ENCODE measurements at regions of chr7 and their contacts with region 1.

Region 1: GRCh38 chr7:111098011-111098925 is 7.3 kb downstream of the LRRN3 start:
- DNase-seq: no peak
- ATAC-seq: peak; percentile 68
- H3K4me3 ChIP-seq: no peak overlapping the region
- H3K27ac ChIP-seq: no peak overlapping the region
- H3K4me1 ChIP-seq: no peaks in the 10 kb centered on the region
- H3K27me3 ChIP-seq: no peaks in the 10 kb centered on the region
- CTCF ChIP-seq: peak; percentile 58 to 71 (median 60)
- EP300 ChIP-seq: no peak
- POLR2A ChIP-seq: no peak
- RAD21 ChIP-seq: peak; percentile 66

Region 2: GRCh38 chr7:109844362-109844761 is 1253.9 kb before region 1 on chr7:
- CTCF ChIA-PET with region 1: no interaction called
- POLR2A ChIA-PET with region 1: no interaction called
- RAD21 ChIA-PET with region 1: no interaction called
- SMC1A ChIA-PET with region 1: interaction called, 4 read pairs
- in situ Hi-C with region 1: no loop called
- intact Hi-C with region 1: loop called (anchors 10 kb)
- DNase-seq: no peak
- ATAC-seq: no peak
- H3K4me3 ChIP-seq: no peak overlapping the region
- H3K27ac ChIP-seq: no peak overlapping the region
- H3K4me1 ChIP-seq: no peaks in the 10 kb centered on the region
- H3K27me3 ChIP-seq: no peaks in the 10 kb centered on the region
- CTCF ChIP-seq: peak; percentile 20 to 41 (median 27); a peak in 4 of 6 replicates
- EP300 ChIP-seq: no peak
- POLR2A ChIP-seq: no peak
- RAD21 ChIP-seq: peak; percentile 72

Region 3: DNA sequence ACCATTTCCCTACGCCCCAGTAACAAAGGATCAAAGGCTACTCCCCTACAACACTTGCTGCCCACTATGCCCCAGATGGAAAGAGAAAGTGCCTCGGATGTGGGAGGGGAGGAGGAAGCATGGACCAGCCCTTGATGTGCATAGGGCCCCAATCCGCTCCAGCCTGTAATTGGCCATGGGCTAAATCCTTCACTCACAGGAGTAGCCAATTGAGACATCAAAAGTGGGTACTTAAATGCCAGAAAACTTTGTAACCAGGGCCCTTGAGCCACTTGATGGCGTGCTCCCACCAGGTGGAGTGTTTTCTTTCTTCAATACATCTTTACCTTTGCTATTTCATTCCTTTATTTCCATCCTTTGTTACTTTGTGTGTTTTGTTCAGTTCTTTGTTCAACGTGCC is 507.9 kb before region 1 on chr7:
- CTCF ChIA-PET with region 1: interaction called, 4 read pairs
- POLR2A ChIA-PET with region 1: no interaction called
- RAD21 ChIA-PET with region 1: interaction called, 3 read pairs
- SMC1A ChIA-PET with region 1: interaction called, 4 read pairs
- in situ Hi-C with region 1: no loop called
- intact Hi-C with region 1: loop called (anchors 2 kb)
- DNase-seq: no peak
- ATAC-seq: peak; percentile 78
- H3K4me3 ChIP-seq: no peak overlapping the region
- H3K27ac ChIP-seq: no peak overlapping the region
- H3K4me1 ChIP-seq: no peaks in the 10 kb centered on the region
- H3K27me3 ChIP-seq: no peaks in the 10 kb centered on the region
- CTCF ChIP-seq: peak in 1 of 3 experiments; percentile 30; a peak in 1 of 6 replicates
- EP300 ChIP-seq: no peak
- POLR2A ChIP-seq: no peak
- RAD21 ChIP-seq: 0 out of 2 replicates have a peak, but pooled peaks have one; percentile 8

Region 4: GRCh38 chr7:110888641-110889040 is 209.6 kb before region 1 on chr7:
- CTCF ChIA-PET with region 1: no interaction called
- POLR2A ChIA-PET with region 1: no interaction called
- RAD21 ChIA-PET with region 1: no interaction called
- SMC1A ChIA-PET with region 1: no interaction called
- in situ Hi-C with region 1: no loop called
- intact Hi-C with region 1: no loop called
- DNase-seq: no peak
- ATAC-seq: no peak
- H3K4me3 ChIP-seq: no peak overlapping the region
- H3K27ac ChIP-seq: no peak overlapping the region
- H3K4me1 ChIP-seq: no peaks in the 10 kb centered on the region
- H3K27me3 ChIP-seq: no peaks in the 10 kb centered on the region
- CTCF ChIP-seq: no peak
- EP300 ChIP-seq: no peak
- POLR2A ChIP-seq: no peak
- RAD21 ChIP-seq: no peak